Activated CD8-positive, alpha-beta T cell treated with anti-CD3 and anti-CD28 coated beads for 36 hours (primary cell): ENCODE measurements at regions of chr12 and their contacts with region 1.

Region 1: DNA sequence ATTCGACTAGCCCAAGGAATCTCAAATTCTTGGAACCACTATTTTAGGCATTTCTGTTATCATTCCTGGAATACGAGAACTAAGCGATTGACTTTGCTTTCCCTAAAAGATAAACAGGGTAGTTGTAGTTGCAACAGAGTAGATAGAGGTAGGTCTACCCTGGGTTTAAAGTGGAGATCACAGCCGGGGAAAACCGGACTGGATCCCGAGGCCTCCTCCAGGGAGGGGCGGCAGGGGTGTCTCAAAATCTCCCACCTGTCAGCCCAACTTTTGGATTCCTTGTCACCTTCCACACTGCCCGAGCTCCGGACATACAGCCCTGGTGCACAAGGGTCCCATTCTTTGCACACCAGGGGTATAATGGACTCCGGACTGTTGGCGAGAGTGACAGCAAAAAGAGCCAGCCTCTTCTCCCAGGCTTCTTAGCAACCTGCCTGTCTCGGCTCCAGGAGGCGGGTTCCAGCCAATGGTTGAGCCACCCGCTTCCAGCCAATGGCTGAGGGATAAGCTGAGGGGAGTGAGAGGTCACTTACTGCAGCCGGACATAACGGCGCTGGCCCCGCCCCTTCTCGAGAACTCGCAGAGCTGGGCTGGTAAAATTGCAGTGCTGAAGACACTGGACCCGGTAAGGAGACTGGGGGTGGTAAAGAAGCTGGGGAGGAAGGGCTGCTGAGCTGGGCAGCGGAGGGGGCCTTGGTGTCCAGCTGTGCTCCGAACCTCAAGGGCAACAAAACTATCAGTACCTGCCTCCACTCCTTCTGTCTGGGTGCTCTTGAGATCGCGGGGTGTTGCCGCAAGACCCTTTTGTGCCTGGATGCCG is at the start of gene SUOX:
- DNase-seq: peak; percentile 65
- ATAC-seq: peak; percentile 88
- H3K4me3 Mint-ChIP-seq: peak within 1 kb of the TSS; percentile 74
- H3K27ac Mint-ChIP-seq: peak within 1 kb of the TSS; percentile 51
- H3K4me1 Mint-ChIP-seq: peaks cover 24% of the 10 kb centered on the region
- H3K27me3 Mint-ChIP-seq: peaks cover 11% of the 10 kb centered on the region
- CTCF ChIP-seq: no peak
- total RNA-seq, gene SUOX: 4.6 to 6.2 TPM

Region 2: DNA sequence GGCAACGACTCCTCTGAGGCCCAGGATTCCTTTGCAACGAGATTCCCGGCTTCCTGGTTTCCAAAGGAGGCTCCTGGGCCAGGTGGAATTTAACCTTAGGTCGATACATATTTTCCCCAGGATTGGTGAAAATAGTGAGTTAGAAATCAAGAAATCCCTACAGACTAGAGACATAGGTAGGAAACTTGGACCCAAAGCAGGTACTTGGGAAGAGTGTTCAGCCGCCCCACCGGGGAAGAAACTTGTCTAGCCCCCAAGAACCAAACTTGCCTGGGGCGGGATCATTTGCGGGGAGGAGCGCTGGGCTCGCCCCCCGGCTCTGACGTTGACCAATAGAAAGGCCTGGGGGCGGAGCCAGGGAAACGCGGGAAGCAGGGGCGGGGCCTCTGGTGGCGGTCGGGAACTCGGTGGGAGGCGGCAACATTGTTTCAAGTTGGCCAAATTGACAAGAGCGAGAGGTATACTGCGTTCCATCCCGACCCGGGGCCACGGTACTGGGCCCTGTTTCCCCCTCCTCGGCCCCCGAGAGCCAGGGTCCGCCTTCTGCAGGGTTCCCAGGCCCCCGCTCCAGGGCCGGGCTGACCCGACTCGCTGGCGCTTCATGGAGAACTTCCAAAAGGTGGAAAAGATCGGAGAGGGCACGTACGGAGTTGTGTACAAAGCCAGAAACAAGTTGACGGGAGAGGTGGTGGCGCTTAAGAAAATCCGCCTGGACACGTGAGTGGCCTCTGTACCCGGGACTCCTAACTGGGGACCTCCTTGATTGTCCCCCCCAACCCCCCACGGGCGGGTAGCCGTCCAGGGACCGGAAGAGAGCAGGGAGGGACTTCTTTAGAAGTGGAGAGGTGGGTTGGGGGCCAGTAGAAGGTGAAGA is 30.3 kb before region 1 on chr12 and contains the start of gene CDK2:
- CTCF ChIA-PET with region 1: interaction called, 14 read pairs
- POLR2A ChIA-PET with region 1: interaction called, 4 read pairs
- intact Hi-C with region 1: no loop called
- DNase-seq: peak; percentile 96
- ATAC-seq: peak; percentile 98
- H3K4me3 Mint-ChIP-seq: peak within 1 kb of the TSS; percentile 98
- H3K27ac Mint-ChIP-seq: peak within 1 kb of the TSS; percentile 89
- H3K4me1 Mint-ChIP-seq: peaks cover 22% of the 10 kb centered on the region
- H3K27me3 Mint-ChIP-seq: no peaks in the 10 kb centered on the region
- CTCF ChIP-seq: no peak
- total RNA-seq, gene CDK2: 86.7 to 90.1 TPM

Region 3: GRCh38 chr12:55982319-55982936 is 14.5 kb before region 1 on chr12:
- CTCF ChIA-PET with region 1: interaction called, 33 read pairs
- POLR2A ChIA-PET with region 1: no interaction called
- intact Hi-C with region 1: no loop called
- DNase-seq: no peak
- ATAC-seq: no peak
- H3K4me3 Mint-ChIP-seq: no peak overlapping the region
- H3K27ac Mint-ChIP-seq: peak overlapping the region; percentile 30
- H3K4me1 Mint-ChIP-seq: peaks cover 10% of the 10 kb centered on the region
- H3K27me3 Mint-ChIP-seq: no peaks in the 10 kb centered on the region
- CTCF ChIP-seq: no peak

Region 4: GRCh38 chr12:56020423-56021184 is 23.7 kb after region 1 on chr12 and contains the start of gene IKZF4:
- CTCF ChIA-PET with region 1: interaction called, 81 read pairs
- POLR2A ChIA-PET with region 1: interaction called, 9 read pairs
- intact Hi-C with region 1: no loop called
- DNase-seq: peak; percentile 43
- ATAC-seq: peak; percentile 43
- H3K4me3 Mint-ChIP-seq: peak within 1 kb of the TSS; percentile 87
- H3K27ac Mint-ChIP-seq: peak within 1 kb of the TSS; percentile 89
- H3K4me1 Mint-ChIP-seq: peaks cover 31% of the 10 kb centered on the region
- H3K27me3 Mint-ChIP-seq: no peaks in the 10 kb centered on the region
- CTCF ChIP-seq: no peak
- total RNA-seq, gene IKZF4: 20.5 to 20.8 TPM

Region 5: DNA sequence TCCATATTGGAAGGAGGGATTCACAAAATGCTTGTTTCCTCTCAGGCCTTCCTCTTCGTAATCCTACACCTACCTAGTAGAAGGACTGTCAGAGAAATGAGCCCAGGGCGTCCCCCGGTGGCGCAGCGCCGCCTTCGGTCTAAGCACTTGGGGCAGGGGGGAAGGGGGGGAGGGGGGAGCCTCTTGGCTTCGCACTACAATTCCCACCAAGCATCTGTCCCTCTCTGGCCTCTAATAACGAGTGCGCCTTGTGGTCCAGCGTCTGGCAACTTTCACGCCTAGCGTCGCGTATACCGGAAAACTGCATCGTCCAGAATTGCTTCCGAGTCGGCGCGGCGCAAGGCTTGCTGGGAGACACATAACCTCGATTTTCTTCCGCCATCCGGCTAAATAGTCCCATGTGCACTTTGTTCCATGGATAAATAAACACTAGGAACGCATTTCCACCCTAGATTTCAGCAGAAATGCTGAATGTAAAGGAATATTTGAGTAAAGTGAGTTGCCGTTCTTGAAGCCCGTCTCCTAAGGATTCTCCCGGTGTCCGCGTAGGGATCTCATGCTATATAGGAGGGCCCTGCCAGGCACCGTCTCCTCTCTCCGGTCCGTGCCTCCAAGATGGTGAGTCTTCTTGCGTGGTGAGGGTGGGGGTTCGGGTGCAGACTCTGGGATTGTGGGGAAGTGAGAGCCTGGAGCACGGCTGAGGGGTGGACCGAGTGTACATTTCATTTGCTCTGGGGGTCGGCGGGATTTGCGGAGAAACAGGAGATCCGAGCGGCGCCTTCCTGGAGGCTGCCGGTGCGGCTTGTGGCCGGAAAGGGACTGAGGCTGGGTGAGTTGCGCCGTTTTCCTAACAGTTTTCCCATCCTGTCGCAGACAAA is 44.9 kb after region 1 on chr12 and contains the start of gene RPS26:
- CTCF ChIA-PET with region 1: interaction called, 55 read pairs
- POLR2A ChIA-PET with region 1: interaction called, 17 read pairs
- intact Hi-C with region 1: loop called (anchors 2 kb)
- DNase-seq: peak; percentile 97
- ATAC-seq: peak; percentile 90
- H3K4me3 Mint-ChIP-seq: peak within 1 kb of the TSS; percentile 84
- H3K27ac Mint-ChIP-seq: peak within 1 kb of the TSS; percentile 92
- H3K4me1 Mint-ChIP-seq: peaks cover 52% of the 10 kb centered on the region
- H3K27me3 Mint-ChIP-seq: no peaks in the 10 kb centered on the region
- CTCF ChIP-seq: peak; percentile 57
- total RNA-seq, gene RPS26: 29.7 to 29.8 TPM